ENCODE measurements at regions of chr16 and their contacts with region 1.

Region 1: DNA sequence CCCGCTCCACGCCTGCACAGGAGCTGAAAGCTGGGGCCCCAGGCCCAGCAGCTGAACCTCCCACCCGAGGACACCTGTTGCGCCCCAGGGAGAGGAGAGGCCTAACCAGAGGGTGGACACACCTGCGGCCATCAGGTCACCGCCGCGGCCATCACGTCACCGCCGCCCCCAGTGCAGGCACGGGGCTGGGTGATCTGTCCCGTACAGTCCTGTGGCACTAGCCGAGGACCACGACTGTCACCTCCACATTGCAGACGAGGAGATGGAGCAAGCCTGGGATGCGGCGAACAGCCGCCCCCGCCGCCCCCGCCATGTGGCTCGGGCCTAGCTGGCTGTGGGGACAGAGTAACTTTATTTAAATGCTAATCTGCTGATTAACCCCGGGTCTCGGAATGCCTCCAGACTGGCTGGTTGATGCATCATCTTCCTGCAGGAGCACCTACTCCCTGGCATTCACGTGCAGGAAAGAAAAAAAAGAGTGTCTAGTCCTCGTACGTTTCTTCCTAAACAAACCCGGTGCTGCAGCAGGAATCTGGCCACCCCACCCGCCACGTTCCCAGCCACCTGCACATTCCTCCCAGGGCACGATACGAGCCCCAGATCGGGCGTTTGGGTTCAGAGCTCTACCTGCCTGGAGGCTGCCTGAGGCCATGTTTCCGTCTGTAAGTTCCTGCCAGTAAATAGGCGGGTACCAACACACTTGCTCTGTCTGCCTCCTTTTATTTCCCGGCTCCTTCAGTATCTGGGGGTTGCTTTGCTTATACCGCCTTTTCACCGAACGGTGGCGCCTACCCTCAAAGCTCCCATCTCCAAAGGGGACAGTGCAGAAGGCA is 29.9 kb downstream of the PIEZO1 start:
- DNase-seq: peak; percentile 84
- H3K4me3 ChIP-seq: no peak overlapping the region
- H3K27ac ChIP-seq: peak overlapping the region in 1 of 2 experiments; percentile 65; a peak in 2 of 4 replicates
- H3K4me1 ChIP-seq: peaks cover 8 to 12% of the 10 kb centered on the region in 2 experiments; a peak in 2 of 4 replicates
- H3K27me3 ChIP-seq: no peaks in the 10 kb centered on the region
- CTCF ChIP-seq: peak; percentile 68
- EP300 ChIP-seq: peak in 1 of 2 experiments; percentile 38; a peak in 1 of 4 replicates
- RAD21 ChIP-seq: peak; percentile 63

Region 2: GRCh38 chr16:88655053-88655732 is 99.9 kb before region 1 on chr16:
- CTCF ChIA-PET with region 1: no interaction called
- POLR2A ChIA-PET with region 1: no interaction called
- DNase-seq: no peak
- H3K4me3 ChIP-seq: no peak overlapping the region
- H3K27ac ChIP-seq: no peak overlapping the region
- H3K4me1 ChIP-seq: peaks cover 4 to 6% of the 10 kb centered on the region in 2 experiments; a peak in 2 of 4 replicates
- H3K27me3 ChIP-seq: no peaks in the 10 kb centered on the region
- CTCF ChIP-seq: no peak
- EP300 ChIP-seq: no peak
- RAD21 ChIP-seq: no peak

Region 3: DNA sequence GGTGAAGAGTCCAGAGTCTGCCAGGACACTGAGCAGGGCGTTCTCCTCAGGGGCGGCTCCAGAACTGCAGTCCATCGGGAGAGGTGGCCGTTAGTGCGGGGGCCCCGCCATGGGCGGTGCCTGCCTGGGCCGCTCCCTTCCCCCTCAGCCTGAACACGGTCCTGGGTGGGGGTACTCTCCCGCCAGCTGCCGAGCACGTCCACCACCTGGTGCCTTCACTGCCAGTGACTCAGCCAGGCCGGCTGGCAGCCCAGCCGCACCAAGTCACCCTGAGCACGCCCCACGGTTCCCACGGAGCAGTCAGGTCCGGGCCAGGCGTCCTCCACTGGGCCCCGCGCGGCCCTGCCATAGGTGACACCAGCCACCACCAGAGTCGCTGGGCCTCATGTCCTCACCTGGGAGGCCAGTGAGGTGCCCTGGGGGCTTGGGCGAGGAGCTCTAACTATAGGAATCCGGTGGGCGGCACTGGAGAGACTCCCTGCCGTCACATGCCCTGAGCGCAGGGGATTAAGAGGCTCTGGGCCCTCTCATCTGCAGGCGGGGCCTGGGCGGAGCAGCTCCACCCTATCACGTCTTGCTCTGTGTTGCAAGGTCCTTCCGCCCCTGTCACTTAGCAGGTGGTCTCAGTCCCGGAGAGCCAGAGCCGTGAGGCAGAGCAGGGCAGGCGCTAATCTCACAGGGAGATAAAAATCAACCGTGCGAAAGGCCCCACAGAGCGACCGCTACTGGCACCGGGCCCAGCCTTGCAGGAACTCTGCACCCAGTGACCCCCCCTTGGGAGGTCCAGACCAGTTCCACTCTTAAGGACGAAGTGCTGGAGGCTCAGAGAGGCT is 15.5 kb after region 1 on chr16:
- CTCF ChIA-PET with region 1: interaction called, 93 read pairs
- POLR2A ChIA-PET with region 1: no interaction called
- DNase-seq: peak; percentile 78
- H3K4me3 ChIP-seq: peak overlapping the region; percentile 11 to 24; a peak in 2 of 4 replicates
- H3K27ac ChIP-seq: peak overlapping the region; percentile 16 to 88; a peak in 3 of 4 replicates
- H3K4me1 ChIP-seq: peaks cover 35 to 67% of the 10 kb centered on the region in 2 experiments; a peak in 3 of 4 replicates
- H3K27me3 ChIP-seq: no peaks in the 10 kb centered on the region
- CTCF ChIP-seq: no peak
- EP300 ChIP-seq: peak in 1 of 2 experiments; percentile 83; a peak in 1 of 4 replicates
- RAD21 ChIP-seq: no peak

Region 4: DNA sequence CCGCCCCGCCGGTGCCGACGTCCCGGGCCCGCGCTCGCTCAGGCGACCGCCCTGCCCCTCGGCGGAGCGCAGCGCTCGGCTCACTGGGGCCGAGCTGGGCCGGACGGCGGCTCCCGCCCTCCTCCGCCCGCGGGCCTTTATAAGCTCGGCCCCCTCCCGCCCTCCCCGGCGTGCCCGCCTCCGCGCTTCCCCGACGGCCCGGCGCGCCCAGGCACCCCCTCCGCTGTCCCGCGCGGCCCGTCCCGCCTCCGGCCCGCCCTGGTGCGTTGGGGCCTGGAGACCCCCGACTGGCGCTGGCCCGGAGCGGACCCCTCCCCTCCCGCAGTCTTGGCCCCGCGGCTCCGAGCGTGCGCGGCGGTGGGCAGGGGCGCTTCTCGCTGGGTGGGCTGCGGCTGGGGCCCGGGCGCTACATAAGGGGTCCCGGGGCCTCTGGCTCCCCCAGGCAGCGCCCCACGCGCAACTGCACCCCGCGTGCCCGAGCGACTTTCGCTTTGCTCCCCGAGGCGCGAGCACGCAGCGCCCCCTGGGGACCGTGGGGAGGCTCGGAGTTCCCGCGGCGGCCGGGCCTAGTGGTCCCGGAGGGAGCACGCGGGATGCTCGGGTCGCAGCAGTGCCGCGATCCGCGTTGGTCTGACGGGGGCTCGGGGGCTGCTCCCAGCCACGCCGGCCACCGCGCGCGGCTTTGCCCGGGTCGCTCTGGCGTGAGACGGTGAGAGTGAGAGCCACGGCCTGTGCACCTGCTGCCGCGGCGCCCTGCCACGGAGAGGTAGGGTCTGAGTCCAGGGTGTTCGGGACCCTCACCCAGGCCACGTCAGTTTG is 30.2 kb after region 1 on chr16 and contains the start of gene PIEZO1:
- CTCF ChIA-PET with region 1: interaction called, 35 read pairs
- POLR2A ChIA-PET with region 1: no interaction called
- DNase-seq: peak; percentile 86
- H3K4me3 ChIP-seq: peak within 1 kb of the TSS; percentile 58 to 76
- H3K27ac ChIP-seq: peak within 1 kb of the TSS; percentile 43 to 84; a peak in 3 of 4 replicates
- H3K4me1 ChIP-seq: peaks cover 0 to 36% of the 10 kb centered on the region in 2 experiments; a peak in 3 of 4 replicates
- H3K27me3 ChIP-seq: no peaks in the 10 kb centered on the region
- CTCF ChIP-seq: peak; percentile 69
- EP300 ChIP-seq: no peak
- RAD21 ChIP-seq: peak; percentile 74
- polyA plus RNA-seq, gene PIEZO1: 111 and 184 TPM in 2 replicates